CD8-positive, alpha-beta T cell (primary cell): ENCODE measurements at regions of chr14 and their contacts with region 1.

Region 1: GRCh38 chr14:70907176-70907995 is at the start of gene PCNX1:
- DNase-seq: peak; percentile 84 to 95 (median 89)
- ATAC-seq: peak; percentile 80
- H3K4me3 ChIP-seq: peak within 1 kb of the TSS; percentile 87 to 95
- H3K4me3 Mint-ChIP-seq: peak within 1 kb of the TSS; percentile 96
- H3K27ac ChIP-seq: peak within 1 kb of the TSS; percentile 70 to 92
- H3K27ac Mint-ChIP-seq: peak within 1 kb of the TSS; percentile 94
- H3K4me1 ChIP-seq: peaks cover 41% of the 10 kb centered on the region
- H3K4me1 Mint-ChIP-seq: peaks cover 57% of the 10 kb centered on the region
- H3K27me3 ChIP-seq: no peaks in the 10 kb centered on the region
- H3K27me3 Mint-ChIP-seq: no peaks in the 10 kb centered on the region
- CTCF ChIP-seq: peak; percentile 83
- total RNA-seq, gene PCNX1: 54.0 to 63.5 TPM

Region 2: GRCh38 chr14:69611201-69612011 is 1296.0 kb before region 1 on chr14 and contains the start of gene SUSD6:
- CTCF ChIA-PET with region 1: no interaction called
- POLR2A ChIA-PET with region 1: no interaction called
- intact Hi-C with region 1: loop called in 1 of 2 experiments (anchors 10 kb)
- DNase-seq: peak; percentile 79 to 94 (median 87)
- ATAC-seq: peak; percentile 84
- H3K4me3 ChIP-seq: peak within 1 kb of the TSS; percentile 57 to 67
- H3K4me3 Mint-ChIP-seq: peak within 1 kb of the TSS; percentile 89
- H3K27ac ChIP-seq: peak within 1 kb of the TSS; percentile 62 to 90
- H3K27ac Mint-ChIP-seq: peak within 1 kb of the TSS; percentile 100
- H3K4me1 ChIP-seq: peaks cover 54% of the 10 kb centered on the region
- H3K4me1 Mint-ChIP-seq: peaks cover 54% of the 10 kb centered on the region
- H3K27me3 ChIP-seq: no peaks in the 10 kb centered on the region
- H3K27me3 Mint-ChIP-seq: no peaks in the 10 kb centered on the region
- CTCF ChIP-seq: no peak
- total RNA-seq, gene SUSD6: 86.4 to 92.2 TPM

Region 3: DNA sequence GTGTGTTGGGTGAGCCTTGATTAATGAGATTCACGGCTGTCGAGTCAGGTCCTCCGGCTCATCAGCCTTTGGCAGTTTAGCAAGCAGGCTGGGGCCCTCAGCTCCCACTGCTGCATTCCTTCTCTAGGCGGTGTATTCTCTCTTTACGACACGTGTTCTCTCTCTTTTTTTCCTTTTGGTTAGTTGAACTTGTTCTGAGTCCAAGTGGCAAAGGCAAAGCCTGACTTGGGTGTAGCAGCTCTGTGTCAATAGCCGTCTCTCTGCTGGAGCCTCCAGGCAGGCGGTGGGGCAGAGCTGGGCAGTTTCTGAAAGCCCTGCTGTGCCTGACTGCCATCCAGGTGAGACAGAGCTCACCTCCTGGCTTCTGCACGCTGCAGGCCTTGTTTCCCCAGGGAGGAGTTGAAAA is 1249.4 kb before region 1 on chr14:
- CTCF ChIA-PET with region 1: no interaction called
- POLR2A ChIA-PET with region 1: no interaction called
- intact Hi-C with region 1: no loop called
- DNase-seq: no peak
- ATAC-seq: no peak
- H3K4me3 ChIP-seq: no peak overlapping the region
- H3K4me3 Mint-ChIP-seq: no peak overlapping the region
- H3K27ac ChIP-seq: no peak overlapping the region
- H3K27ac Mint-ChIP-seq: no peak overlapping the region
- H3K4me1 ChIP-seq: peaks cover 13% of the 10 kb centered on the region
- H3K4me1 Mint-ChIP-seq: peaks cover 77% of the 10 kb centered on the region
- H3K27me3 ChIP-seq: no peaks in the 10 kb centered on the region
- H3K27me3 Mint-ChIP-seq: no peaks in the 10 kb centered on the region
- CTCF ChIP-seq: no peak

Region 4: GRCh38 chr14:70809543-70810244 is 97.7 kb before region 1 on chr14:
- CTCF ChIA-PET with region 1: interaction called, 8 read pairs
- POLR2A ChIA-PET with region 1: interaction called, 17 read pairs
- intact Hi-C with region 1: loop called (anchors 1 to 2 kb)
- DNase-seq: peak; percentile 70 to 95 (median 87)
- ATAC-seq: peak; percentile 79
- H3K4me3 ChIP-seq: peak overlapping the region; percentile 58 to 65
- H3K4me3 Mint-ChIP-seq: no peak overlapping the region
- H3K27ac ChIP-seq: peak overlapping the region; percentile 30 to 56
- H3K27ac Mint-ChIP-seq: peak overlapping the region; percentile 80
- H3K4me1 ChIP-seq: peaks cover 12% of the 10 kb centered on the region
- H3K4me1 Mint-ChIP-seq: peaks cover 10% of the 10 kb centered on the region
- H3K27me3 ChIP-seq: no peaks in the 10 kb centered on the region
- H3K27me3 Mint-ChIP-seq: no peaks in the 10 kb centered on the region
- CTCF ChIP-seq: no peak

Region 5: GRCh38 chr14:70879448-70879847 is 27.9 kb before region 1 on chr14:
- CTCF ChIA-PET with region 1: interaction called, 11 read pairs
- POLR2A ChIA-PET with region 1: interaction called, 3 read pairs
- intact Hi-C with region 1: no loop called
- DNase-seq: no peak
- ATAC-seq: no peak
- H3K4me3 ChIP-seq: no peak overlapping the region
- H3K4me3 Mint-ChIP-seq: no peak overlapping the region
- H3K27ac ChIP-seq: no peak overlapping the region
- H3K27ac Mint-ChIP-seq: no peak overlapping the region
- H3K4me1 ChIP-seq: peaks cover 17% of the 10 kb centered on the region
- H3K4me1 Mint-ChIP-seq: peaks cover 19% of the 10 kb centered on the region
- H3K27me3 ChIP-seq: peaks cover 0 to 3% of the 10 kb centered on the region in 2 experiments
- H3K27me3 Mint-ChIP-seq: no peaks in the 10 kb centered on the region
- CTCF ChIP-seq: no peak

Region 6: DNA sequence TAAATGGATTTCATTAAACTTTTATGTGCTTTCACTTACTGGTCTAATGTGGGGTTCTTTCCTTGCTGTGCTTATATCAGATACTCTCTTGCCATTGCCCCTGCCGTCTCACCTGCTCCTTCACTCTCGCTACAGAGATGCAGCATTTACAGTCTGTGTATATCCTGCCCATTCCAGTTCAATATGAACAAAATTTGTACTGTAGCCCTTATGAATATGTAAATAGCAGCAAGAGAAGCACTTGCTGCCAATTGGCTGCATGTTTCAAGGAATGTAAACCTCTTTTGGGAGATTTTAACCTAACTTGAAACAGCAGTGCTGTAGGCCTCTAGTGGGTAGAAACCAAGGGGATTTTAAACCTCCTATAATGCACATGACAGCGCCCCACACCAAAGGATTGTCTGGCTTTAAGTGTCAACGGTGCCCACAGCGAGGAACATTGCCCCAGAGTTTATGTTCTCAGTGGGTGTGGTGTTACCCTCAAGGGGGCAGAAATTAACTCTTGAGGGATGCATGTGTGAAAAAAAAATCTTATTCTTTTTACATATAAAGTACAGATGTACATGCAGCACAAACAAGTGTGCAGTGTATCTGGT is 18.9 kb after region 1 on chr14:
- CTCF ChIA-PET with region 1: interaction called, 34 read pairs
- POLR2A ChIA-PET with region 1: interaction called, 13 read pairs
- intact Hi-C with region 1: loop called (anchors 2 kb)
- DNase-seq: peak in 5 of 9 experiments; percentile 33 to 70 (median 56)
- ATAC-seq: peak; percentile 83
- H3K4me3 ChIP-seq: no peak overlapping the region
- H3K4me3 Mint-ChIP-seq: peak overlapping the region; percentile 23
- H3K27ac ChIP-seq: peak overlapping the region in 1 of 2 experiments; percentile 15
- H3K27ac Mint-ChIP-seq: peak overlapping the region; percentile 45
- H3K4me1 ChIP-seq: peaks cover 54% of the 10 kb centered on the region
- H3K4me1 Mint-ChIP-seq: peaks cover 85% of the 10 kb centered on the region
- H3K27me3 ChIP-seq: no peaks in the 10 kb centered on the region
- H3K27me3 Mint-ChIP-seq: no peaks in the 10 kb centered on the region
- CTCF ChIP-seq: no peak

Region 7: GRCh38 chr14:70955543-70956480 is 48.4 kb after region 1 on chr14:
- CTCF ChIA-PET with region 1: interaction called, 154 read pairs
- POLR2A ChIA-PET with region 1: interaction called, 41 read pairs
- intact Hi-C with region 1: loop called (anchors 1 kb)
- DNase-seq: peak; percentile 10 to 78 (median 55)
- ATAC-seq: peak; percentile 94
- H3K4me3 ChIP-seq: no peak overlapping the region
- H3K4me3 Mint-ChIP-seq: no peak overlapping the region
- H3K27ac ChIP-seq: no peak overlapping the region
- H3K27ac Mint-ChIP-seq: no peak overlapping the region
- H3K4me1 ChIP-seq: peaks cover 20% of the 10 kb centered on the region
- H3K4me1 Mint-ChIP-seq: peaks cover 35% of the 10 kb centered on the region
- H3K27me3 ChIP-seq: no peaks in the 10 kb centered on the region
- H3K27me3 Mint-ChIP-seq: no peaks in the 10 kb centered on the region
- CTCF ChIP-seq: peak; percentile 90

Region 8: DNA sequence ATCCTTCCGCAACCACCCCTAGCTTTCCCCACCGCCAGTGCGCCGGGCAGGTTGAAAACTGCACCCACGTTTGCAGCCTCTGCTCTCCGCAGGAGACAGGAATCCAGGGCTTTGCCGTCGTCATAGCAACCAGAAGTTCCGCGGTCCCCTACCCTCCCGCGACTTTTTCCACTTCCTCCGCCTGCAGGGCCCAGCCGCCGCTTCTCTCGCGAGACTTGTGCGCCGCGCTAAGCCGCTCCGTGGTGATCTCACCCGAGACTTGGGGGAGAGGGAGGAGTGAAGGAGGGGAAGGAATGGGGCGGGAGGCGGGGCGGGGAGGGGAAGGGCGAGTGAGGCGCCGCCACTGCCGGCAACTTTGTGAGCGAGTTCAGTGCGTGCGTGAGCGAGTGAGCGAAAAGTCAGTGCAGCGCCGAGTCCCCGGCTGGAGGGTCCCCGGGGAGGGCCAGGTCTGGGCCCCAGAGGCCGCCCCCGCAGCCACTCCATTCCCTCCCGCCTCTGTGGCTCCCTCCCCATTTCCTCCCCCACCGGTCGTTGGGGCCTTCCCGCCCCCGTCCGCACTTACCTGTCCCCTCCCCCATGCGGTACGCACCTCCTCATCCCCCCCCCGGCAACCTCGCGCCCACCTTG is 412.8 kb after region 1 on chr14:
- CTCF ChIA-PET with region 1: no interaction called
- POLR2A ChIA-PET with region 1: no interaction called
- intact Hi-C with region 1: loop called (anchors 2 to 10 kb)
- DNase-seq: peak; percentile 96 to 100 (median 98)
- ATAC-seq: peak; percentile 87
- H3K4me3 ChIP-seq: peak within 1 kb of the TSS; percentile 83 to 84
- H3K4me3 Mint-ChIP-seq: peak within 1 kb of the TSS; percentile 85
- H3K27ac ChIP-seq: peak within 1 kb of the TSS; percentile 79 to 91
- H3K27ac Mint-ChIP-seq: peak within 1 kb of the TSS; percentile 92
- H3K4me1 ChIP-seq: peaks cover 32% of the 10 kb centered on the region
- H3K4me1 Mint-ChIP-seq: peaks cover 39% of the 10 kb centered on the region
- H3K27me3 ChIP-seq: no peaks in the 10 kb centered on the region
- H3K27me3 Mint-ChIP-seq: no peaks in the 10 kb centered on the region
- CTCF ChIP-seq: no peak